Panc1 (cell line): ENCODE measurements at regions of chr12 and their contacts with region 1.

Region 1: DNA sequence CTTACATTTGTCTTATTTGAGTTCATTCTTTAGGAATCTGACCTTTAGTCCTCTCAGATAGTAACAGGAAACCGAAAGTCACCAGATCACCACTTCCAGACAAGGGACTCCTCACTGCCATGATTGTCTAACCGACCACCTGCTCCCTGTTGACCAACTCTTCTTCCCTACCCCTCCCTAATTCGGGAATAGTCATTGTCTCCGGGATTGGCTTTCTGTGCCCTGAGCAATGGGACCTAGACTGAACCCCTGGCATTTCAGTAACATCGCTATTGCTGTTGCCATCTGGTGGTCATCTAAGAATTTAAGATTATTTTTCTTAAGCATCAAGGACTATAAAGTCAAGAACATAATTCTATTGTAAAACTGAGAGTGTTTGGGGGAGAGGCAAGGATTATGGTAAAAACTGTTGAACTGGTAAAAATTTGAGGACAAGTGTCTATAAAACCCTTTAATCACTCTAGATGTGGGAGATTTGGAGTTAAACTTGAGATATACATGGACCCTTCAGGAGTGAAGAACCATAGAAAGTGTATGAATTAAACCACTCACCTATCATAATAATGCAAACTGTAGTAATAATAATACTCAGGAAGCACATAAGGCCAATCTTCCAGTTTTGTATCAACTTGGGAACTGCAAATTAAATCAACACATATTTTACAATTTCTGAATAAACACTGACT is 6.3 kb downstream of the CLEC2A start:
- DNase-seq: no peak
- ATAC-seq: peak; percentile 63; the same call in 1 of the 2 replicates
- H3K4me3 ChIP-seq: no peak overlapping the region
- H3K27ac ChIP-seq: no peak overlapping the region
- H3K4me1 ChIP-seq: no peaks in the 10 kb centered on the region
- H3K27me3 ChIP-seq: no peaks in the 10 kb centered on the region
- CTCF ChIP-seq: peak; percentile 64

Region 2: GRCh38 chr12:9813821-9814809 is 111.7 kb before region 1 on chr12:
- CTCF ChIA-PET with region 1: no interaction called
- POLR2A ChIA-PET with region 1: no interaction called
- in situ Hi-C with region 1: no loop called
- intact Hi-C with region 1: loop called (anchors 1 kb)
- DNase-seq: no peak
- ATAC-seq: peak; percentile 99
- H3K4me3 ChIP-seq: peak overlapping the region; percentile 19 to 50
- H3K27ac ChIP-seq: no peak overlapping the region
- H3K4me1 ChIP-seq: no peaks in the 10 kb centered on the region
- H3K27me3 ChIP-seq: no peaks in the 10 kb centered on the region
- CTCF ChIP-seq: peak; percentile 90